ENCODE measurements at regions of chr16 and their contacts with region 1.

Region 1: DNA sequence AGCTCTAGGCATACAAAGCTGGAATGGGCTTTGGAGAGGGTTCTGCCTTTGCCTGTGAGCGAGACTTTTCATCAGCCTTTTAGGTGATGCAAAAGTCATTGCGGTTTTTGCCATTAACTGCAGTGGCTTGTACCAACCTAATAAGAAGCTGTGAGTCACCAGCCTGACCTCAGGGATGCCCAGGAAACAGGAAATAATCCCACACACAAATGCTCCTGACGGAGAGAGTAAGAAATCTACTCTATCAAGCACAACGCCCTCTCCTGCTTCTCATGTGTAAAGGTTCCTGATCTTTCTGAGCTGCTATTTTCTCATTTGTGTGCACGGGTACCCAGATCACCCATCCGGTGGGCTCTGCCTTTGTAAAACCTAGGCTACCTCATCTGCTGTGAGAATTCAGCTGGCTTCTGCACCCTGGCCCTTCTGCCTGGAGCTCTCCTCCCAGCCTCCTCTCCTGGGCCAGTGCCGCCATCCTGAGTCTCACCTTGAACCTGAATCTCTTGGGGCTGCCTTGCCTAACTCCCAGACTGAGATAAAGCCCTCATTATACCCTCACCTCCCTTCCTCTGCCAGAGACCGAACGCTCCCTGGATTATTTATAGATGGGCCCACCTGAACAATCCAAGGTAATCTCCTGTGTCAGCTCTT is 299.7 kb downstream of the C16orf95 start:
- DNase-seq: peak; percentile 80
- ATAC-seq: peak; percentile 98
- H3K4me3 ChIP-seq: no peak overlapping the region
- H3K27ac ChIP-seq: no peak overlapping the region
- H3K4me1 ChIP-seq: peaks cover 9% of the 10 kb centered on the region
- H3K27me3 ChIP-seq: 0 out of 2 replicates have a peak, but pooled peaks cover 5% of the 10 kb centered on the region
- CTCF ChIP-seq: peak; percentile 63

Region 2: GRCh38 chr16:86783636-86784626 is 233.6 kb before region 1 on chr16:
- CTCF ChIA-PET with region 1: no interaction called
- POLR2A ChIA-PET with region 1: interaction called, 22 read pairs
- intact Hi-C with region 1: no loop called
- DNase-seq: peak; percentile 89
- ATAC-seq: peak; percentile 95
- H3K4me3 ChIP-seq: no peak overlapping the region
- H3K27ac ChIP-seq: peak overlapping the region; percentile 73
- H3K4me1 ChIP-seq: peaks cover 19% of the 10 kb centered on the region
- H3K27me3 ChIP-seq: no peaks in the 10 kb centered on the region
- CTCF ChIP-seq: no peak

Region 3: GRCh38 chr16:87062569-87063442 is 45.3 kb after region 1 on chr16:
- CTCF ChIA-PET with region 1: interaction called, 3 read pairs
- POLR2A ChIA-PET with region 1: no interaction called
- intact Hi-C with region 1: loop called (anchors 1 kb)
- DNase-seq: peak; percentile 73
- ATAC-seq: peak; percentile 92
- H3K4me3 ChIP-seq: peak overlapping the region; percentile 55
- H3K27ac ChIP-seq: no peak overlapping the region
- H3K4me1 ChIP-seq: peaks cover 7% of the 10 kb centered on the region; the same call in 1 of the 2 replicates
- H3K27me3 ChIP-seq: no peaks in the 10 kb centered on the region
- CTCF ChIP-seq: peak; percentile 86

Measured in PC-3 (cell line).